Cardiac septum (tissue), 1 donor: ENCODE measurements at regions of chr4 and their contacts with region 1.

Region 1: GRCh38 chr4:83074086-83074704 is 39.2 kb downstream of the COPS4 start:
- DNase-seq: no peak

Region 2: DNA sequence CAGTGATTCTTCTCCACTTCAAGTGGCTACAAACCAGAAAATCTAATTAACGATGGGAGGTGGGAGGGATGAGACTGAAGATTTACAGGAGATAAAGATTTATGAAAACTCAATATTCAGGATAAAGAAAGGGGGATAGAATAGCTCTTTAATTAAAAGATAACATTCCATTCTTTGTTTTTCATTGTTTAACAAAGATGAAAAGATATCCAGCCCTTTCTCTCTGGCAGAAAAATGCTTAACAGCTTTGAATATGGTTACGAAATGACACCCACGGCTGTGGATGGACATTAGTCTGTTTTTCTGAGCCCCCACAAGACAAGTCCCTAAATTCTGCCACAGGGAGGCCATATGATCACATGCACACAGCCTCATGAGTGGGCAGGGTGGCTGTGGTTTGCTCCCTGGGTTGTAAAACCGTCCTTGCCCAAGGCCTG is 548.8 kb before region 1 on chr4:
- intact Hi-C with region 1: no loop called
- DNase-seq: no peak

Region 3: GRCh38 chr4:83221897-83222441 is 147.8 kb after region 1 on chr4:
- intact Hi-C with region 1: no loop called
- DNase-seq: no peak

Region 4: GRCh38 chr4:83261307-83261706 is 187.1 kb after region 1 on chr4:
- intact Hi-C with region 1: loop called (anchors 5 kb)
- DNase-seq: no peak